ENCODE measurements at regions of chr9 and their contacts with region 1.

Region 1: GRCh38 chr9:137240861-137241489 is at the start of gene TUBB4B:
- DNase-seq: peak; percentile 98
- H3K4me3 ChIP-seq: peak within 1 kb of the TSS; percentile 84 to 87
- H3K27ac ChIP-seq: peak within 1 kb of the TSS; percentile 95 to 98
- H3K4me1 ChIP-seq: peaks cover 17 to 37% of the 10 kb centered on the region in 2 experiments; a peak in 2 of 4 replicates
- H3K27me3 ChIP-seq: no peaks in the 10 kb centered on the region
- CTCF ChIP-seq: no peak
- EP300 ChIP-seq: no peak; a peak in 1 of 4 replicates
- RAD21 ChIP-seq: no peak
- polyA plus RNA-seq, gene TUBB4B: 415 and 508 TPM in 2 replicates

Region 2: GRCh38 chr9:136147890-136148714 is 1092.9 kb before region 1 on chr9:
- CTCF ChIA-PET with region 1: no interaction called
- POLR2A ChIA-PET with region 1: no interaction called
- DNase-seq: no peak
- H3K4me3 ChIP-seq: no peak overlapping the region
- H3K27ac ChIP-seq: no peak overlapping the region
- H3K4me1 ChIP-seq: no peaks in the 10 kb centered on the region
- H3K27me3 ChIP-seq: peaks cover 27% of the 10 kb centered on the region; the same call in 1 of the 2 replicates
- CTCF ChIP-seq: no peak
- EP300 ChIP-seq: no peak
- RAD21 ChIP-seq: no peak

Region 3: DNA sequence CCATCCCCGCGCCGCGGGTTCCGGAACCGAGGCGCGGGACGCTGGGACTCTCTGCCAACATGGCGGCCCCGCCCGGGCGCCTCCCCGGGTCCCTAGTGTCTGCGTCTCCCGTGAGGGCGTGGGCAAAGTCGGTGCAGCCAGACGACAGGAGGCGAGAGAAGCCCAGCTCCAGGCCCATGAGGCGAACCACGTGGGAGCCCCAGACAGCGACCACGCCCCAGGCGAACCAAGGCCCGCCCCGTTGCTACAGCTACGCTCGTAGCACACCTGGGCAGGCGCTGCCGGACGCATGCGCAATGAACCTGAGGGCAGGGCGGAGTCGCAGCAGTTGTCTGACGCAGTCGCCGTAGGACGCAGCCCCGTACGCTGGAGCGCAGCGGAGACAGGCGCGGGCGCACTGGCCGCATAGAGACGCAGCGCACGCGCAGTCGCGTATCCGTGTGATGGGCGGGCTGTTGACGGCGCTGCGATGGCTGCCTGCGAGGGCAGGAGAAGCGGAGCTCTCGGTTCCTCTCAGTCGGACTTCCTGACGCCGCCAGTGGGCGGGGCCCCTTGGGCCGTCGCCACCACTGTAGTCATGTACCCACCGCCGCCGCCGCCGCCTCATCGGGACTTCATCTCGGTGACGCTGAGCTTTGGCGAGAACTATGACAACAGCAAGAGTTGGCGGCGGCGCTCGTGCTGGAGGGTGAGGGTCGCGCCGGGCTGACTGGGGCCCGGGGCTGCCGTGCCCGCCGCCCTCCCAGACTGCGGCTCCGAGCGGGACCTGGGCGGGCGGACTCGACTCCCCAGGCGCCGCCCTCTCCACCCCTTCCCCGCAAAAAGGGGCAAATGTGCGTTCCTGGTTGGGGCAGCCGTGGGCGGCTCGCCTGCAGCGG is 154.2 kb before region 1 on chr9 and contains the start of gene MAN1B1:
- CTCF ChIA-PET with region 1: interaction called, 4 read pairs
- POLR2A ChIA-PET with region 1: interaction called, 13 read pairs
- DNase-seq: peak; percentile 98
- H3K4me3 ChIP-seq: peak within 1 kb of the TSS; percentile 80 to 93
- H3K27ac ChIP-seq: peak within 1 kb of the TSS; percentile 57 to 88
- H3K4me1 ChIP-seq: peaks cover 13 to 21% of the 10 kb centered on the region in 2 experiments
- H3K27me3 ChIP-seq: no peaks in the 10 kb centered on the region
- CTCF ChIP-seq: no peak
- EP300 ChIP-seq: no peak
- RAD21 ChIP-seq: no peak
- polyA plus RNA-seq, gene MAN1B1: 57.8 and 61.9 TPM in 2 replicates

Region 4: GRCh38 chr9:137129456-137130175 is 111.4 kb before region 1 on chr9:
- CTCF ChIA-PET with region 1: interaction called, 12 read pairs
- POLR2A ChIA-PET with region 1: interaction called, 14 read pairs
- DNase-seq: peak; percentile 96
- H3K4me3 ChIP-seq: peak overlapping the region; percentile 77 to 89
- H3K27ac ChIP-seq: peak overlapping the region; percentile 56 to 87
- H3K4me1 ChIP-seq: peaks cover 3 to 18% of the 10 kb centered on the region in 2 experiments; a peak in 3 of 4 replicates
- H3K27me3 ChIP-seq: no peaks in the 10 kb centered on the region
- CTCF ChIP-seq: no peak
- EP300 ChIP-seq: no peak
- RAD21 ChIP-seq: no peak

Region 5: GRCh38 chr9:137188490-137189296 is 52.3 kb before region 1 on chr9 and contains the starts of genes ANAPC2 and SSNA1:
- CTCF ChIA-PET with region 1: interaction called, 12 read pairs
- POLR2A ChIA-PET with region 1: interaction called, 10 read pairs
- DNase-seq: peak; percentile 99
- H3K4me3 ChIP-seq: peak within 1 kb of the TSS; percentile 71 to 84
- H3K27ac ChIP-seq: peak within 1 kb of the TSS; percentile 91 to 95
- H3K4me1 ChIP-seq: peaks cover 12 to 33% of the 10 kb centered on the region in 2 experiments; a peak in 3 of 4 replicates
- H3K27me3 ChIP-seq: no peaks in the 10 kb centered on the region
- CTCF ChIP-seq: peak; percentile 47
- EP300 ChIP-seq: no peak; a peak in 1 of 4 replicates
- RAD21 ChIP-seq: peak; percentile 53
- polyA plus RNA-seq, gene ANAPC2: 35.1 and 37.7 TPM in 2 replicates
- polyA plus RNA-seq, gene SSNA1: 100 and 124 TPM in 2 replicates

Region 6: DNA sequence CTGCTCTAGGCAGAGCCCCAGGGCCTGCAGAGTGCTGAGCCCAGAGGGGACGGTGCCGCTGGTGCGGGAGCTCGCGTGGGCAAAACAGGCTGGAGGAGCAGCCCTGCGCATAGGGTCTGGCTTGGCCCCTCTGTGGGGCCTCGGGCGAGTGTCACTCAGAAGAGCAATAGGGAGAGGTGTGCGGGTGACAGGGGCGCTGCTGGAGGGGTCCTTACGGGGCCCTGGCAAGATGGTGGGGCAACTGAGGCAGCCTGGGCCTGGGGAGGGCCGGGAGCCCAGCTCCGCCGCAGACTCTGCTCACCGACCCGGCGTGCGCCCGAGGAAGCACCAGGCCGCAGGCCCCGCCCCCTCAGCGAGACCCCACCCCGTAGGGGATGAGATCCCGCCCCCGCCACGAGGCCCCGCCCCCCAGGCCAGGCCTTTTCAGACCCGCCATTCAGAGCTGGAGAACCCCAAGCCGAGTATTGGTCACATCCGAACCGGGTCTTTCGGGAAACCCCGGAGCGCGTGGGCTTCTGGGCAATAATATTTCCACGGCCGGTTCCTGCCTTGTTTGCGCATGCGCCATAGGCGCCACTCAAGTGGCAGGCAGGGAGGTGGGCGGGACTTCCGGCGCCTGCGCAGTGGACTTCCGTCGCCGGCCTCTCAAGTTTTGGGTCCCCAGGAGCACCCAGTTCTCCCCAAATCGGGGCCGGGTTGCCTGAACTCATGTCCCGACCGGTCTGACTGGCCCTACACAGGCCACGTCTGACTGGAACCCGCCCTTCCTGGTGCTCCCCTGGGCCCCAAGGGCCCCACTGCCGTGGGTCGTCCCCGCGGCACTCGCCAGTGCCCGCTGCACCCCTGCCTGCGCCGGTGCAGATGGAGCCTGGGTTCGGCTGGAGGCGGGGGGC is 17.7 kb before region 1 on chr9:
- CTCF ChIA-PET with region 1: interaction called, 95 read pairs
- POLR2A ChIA-PET with region 1: interaction called, 18 read pairs
- DNase-seq: peak; percentile 99
- H3K4me3 ChIP-seq: peak overlapping the region; percentile 69 to 92
- H3K27ac ChIP-seq: peak overlapping the region; percentile 75 to 86
- H3K4me1 ChIP-seq: peaks cover 5 to 41% of the 10 kb centered on the region in 2 experiments; a peak in 1 of 4 replicates
- H3K27me3 ChIP-seq: no peaks in the 10 kb centered on the region
- CTCF ChIP-seq: no peak
- EP300 ChIP-seq: no peak
- RAD21 ChIP-seq: no peak

Region 7: DNA sequence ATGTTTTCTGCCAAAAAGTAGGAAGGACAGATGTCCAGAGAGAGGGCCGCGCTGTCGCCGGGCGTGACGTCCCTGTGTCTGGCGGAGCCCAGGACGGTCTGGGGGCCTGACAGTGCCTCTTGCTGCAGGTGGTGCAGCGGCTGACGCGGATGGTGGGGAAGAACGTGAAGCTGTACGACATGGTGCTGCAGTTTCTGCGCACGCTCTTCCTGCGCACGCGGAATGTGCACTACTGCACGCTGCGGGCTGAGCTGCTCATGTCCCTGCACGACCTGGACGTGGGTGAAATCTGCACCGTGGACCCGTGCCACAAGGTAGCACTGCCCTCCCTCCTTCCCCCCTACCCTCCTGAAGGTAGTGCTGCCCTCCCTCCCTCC is 21.9 kb after region 1 on chr9:
- CTCF ChIA-PET with region 1: interaction called, 26 read pairs
- POLR2A ChIA-PET with region 1: interaction called, 83 read pairs
- DNase-seq: no peak
- H3K4me3 ChIP-seq: no peak overlapping the region
- H3K27ac ChIP-seq: no peak overlapping the region
- H3K4me1 ChIP-seq: no peaks in the 10 kb centered on the region
- H3K27me3 ChIP-seq: no peaks in the 10 kb centered on the region
- CTCF ChIP-seq: no peak
- EP300 ChIP-seq: no peak
- RAD21 ChIP-seq: no peak

Region 8: DNA sequence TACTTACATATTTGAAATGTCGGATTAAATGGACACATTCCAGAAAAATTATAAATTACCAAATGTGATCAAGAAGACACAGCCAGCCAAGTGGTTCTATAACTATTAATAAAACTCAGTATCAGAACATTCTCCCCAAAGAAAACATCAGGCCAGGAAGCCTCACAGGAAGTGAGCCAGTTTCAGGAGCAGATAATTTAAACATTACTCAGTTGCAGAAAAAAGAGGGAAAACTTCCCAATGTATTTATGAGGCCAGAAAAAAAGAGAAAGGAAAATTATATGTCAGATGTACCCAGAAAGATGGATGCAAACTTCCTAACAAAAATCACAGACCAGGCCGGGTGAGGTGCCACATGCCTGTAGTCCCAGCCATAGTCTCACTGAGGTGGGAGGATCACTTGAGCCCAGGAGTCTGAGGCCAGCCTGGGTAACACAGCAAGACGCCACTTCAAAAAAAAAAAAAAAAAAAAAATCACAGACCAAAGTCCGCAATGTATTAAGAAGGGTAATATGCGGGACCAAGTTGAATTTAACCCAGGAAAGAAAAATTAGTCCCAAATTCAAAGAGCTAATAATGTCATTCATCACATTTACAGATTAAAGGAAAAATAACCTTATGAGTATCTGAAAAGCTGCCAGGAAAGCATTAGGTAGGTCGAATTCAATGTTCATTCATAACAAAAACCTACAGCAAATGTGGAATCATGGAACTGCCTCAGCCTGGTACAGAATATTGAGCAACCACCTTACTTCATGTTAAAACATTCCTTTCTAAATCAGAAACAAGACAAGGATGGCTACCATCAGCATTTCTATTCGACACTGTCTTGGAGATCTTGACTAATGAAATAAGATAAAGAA is 98.3 kb after region 1 on chr9:
- CTCF ChIA-PET with region 1: no interaction called
- POLR2A ChIA-PET with region 1: no interaction called
- DNase-seq: no peak
- H3K4me3 ChIP-seq: no peak overlapping the region
- H3K27ac ChIP-seq: no peak overlapping the region
- H3K4me1 ChIP-seq: peaks cover 0 to 11% of the 10 kb centered on the region in 2 experiments; a peak in 1 of 4 replicates
- H3K27me3 ChIP-seq: no peaks in the 10 kb centered on the region
- CTCF ChIP-seq: no peak
- EP300 ChIP-seq: no peak
- RAD21 ChIP-seq: no peak

Region 9: GRCh38 chr9:137353223-137354152 is 112.5 kb after region 1 on chr9:
- CTCF ChIA-PET with region 1: no interaction called
- POLR2A ChIA-PET with region 1: no interaction called
- DNase-seq: no peak
- H3K4me3 ChIP-seq: no peak overlapping the region
- H3K27ac ChIP-seq: no peak overlapping the region
- H3K4me1 ChIP-seq: no peaks in the 10 kb centered on the region
- H3K27me3 ChIP-seq: no peaks in the 10 kb centered on the region
- CTCF ChIP-seq: no peak
- EP300 ChIP-seq: no peak
- RAD21 ChIP-seq: no peak